ENCODE measurements at regions of chr1 and their contacts with region 1.

Region 1: GRCh38 chr1:204494281-204495077 is at the start of gene PIK3C2B:
- DNase-seq: peak; percentile 92
- H3K4me3 Mint-ChIP-seq: peak within 1 kb of the TSS; percentile 86
- H3K27ac Mint-ChIP-seq: peak within 1 kb of the TSS; percentile 24
- H3K4me1 Mint-ChIP-seq: peaks cover 26% of the 10 kb centered on the region
- H3K27me3 Mint-ChIP-seq: peaks cover 41% of the 10 kb centered on the region
- CTCF ChIP-seq: peak; percentile 93
- total RNA-seq, gene PIK3C2B: 3.4 and 4.4 TPM in 2 replicates

Region 2: GRCh38 chr1:204417231-204417997 is 77.1 kb before region 1 on chr1:
- CTCF ChIA-PET with region 1: interaction called, 1,125 read pairs
- POLR2A ChIA-PET with region 1: interaction called, 82 read pairs
- intact Hi-C with region 1: no loop called
- DNase-seq: peak; percentile 100
- H3K4me3 Mint-ChIP-seq: peak overlapping the region; percentile 65
- H3K27ac Mint-ChIP-seq: peak overlapping the region; percentile 91
- H3K4me1 Mint-ChIP-seq: peaks cover 48% of the 10 kb centered on the region
- H3K27me3 Mint-ChIP-seq: no peaks in the 10 kb centered on the region
- CTCF ChIP-seq: no peak

Region 3: DNA sequence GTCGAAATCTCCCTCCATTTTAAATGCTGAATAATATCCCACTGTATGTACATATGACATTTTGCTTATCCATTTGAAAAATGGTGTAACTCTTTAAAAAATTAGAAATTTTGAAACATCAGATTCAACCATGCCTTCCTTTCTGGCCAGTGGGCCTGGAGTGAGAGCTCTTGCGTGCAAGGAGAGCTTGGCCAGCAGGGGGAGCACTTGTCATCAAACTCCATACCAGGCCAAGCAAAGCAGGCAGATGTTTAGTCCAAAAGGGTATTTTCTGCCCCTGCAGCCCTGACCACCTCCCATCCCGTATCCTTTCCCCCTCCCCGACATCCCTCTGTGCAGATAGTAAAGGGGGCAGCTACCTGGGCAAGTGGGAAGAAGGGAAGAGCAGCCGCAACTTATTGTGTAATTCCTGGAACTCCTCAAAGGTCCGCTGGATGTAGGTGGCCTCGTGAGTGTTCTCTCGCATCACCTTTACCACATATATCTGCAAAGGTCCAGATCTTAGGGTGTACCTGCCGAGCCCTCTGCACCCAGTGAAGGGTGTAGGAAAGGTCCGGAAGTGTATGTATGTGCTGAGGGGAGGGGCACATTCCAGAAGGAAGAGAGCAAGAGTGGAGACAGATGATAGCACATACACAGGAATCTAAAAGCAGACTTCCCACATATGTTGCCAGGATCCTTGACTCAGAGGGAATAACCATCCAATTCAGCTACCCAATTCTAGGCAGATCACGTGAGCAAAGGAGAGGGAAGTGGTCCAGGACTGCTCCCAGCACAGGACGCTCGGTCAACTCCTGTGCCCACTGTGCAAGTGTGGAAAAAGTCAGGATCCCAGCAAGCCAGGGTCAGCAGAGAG is 62.9 kb before region 1 on chr1:
- CTCF ChIA-PET with region 1: interaction called, 1,125 read pairs
- POLR2A ChIA-PET with region 1: interaction called, 253 read pairs
- intact Hi-C with region 1: loop called (anchors 1 kb)
- DNase-seq: peak; percentile 88
- H3K4me3 Mint-ChIP-seq: no peak overlapping the region
- H3K27ac Mint-ChIP-seq: no peak overlapping the region
- H3K4me1 Mint-ChIP-seq: peaks cover 39% of the 10 kb centered on the region
- H3K27me3 Mint-ChIP-seq: no peaks in the 10 kb centered on the region
- CTCF ChIP-seq: peak; percentile 99

Region 4: GRCh38 chr1:204446370-204447111 is 47.9 kb before region 1 on chr1:
- CTCF ChIA-PET with region 1: interaction called, 1,125 read pairs
- POLR2A ChIA-PET with region 1: interaction called, 64 read pairs
- intact Hi-C with region 1: loop called (anchors 1 kb)
- DNase-seq: peak; percentile 65
- H3K4me3 Mint-ChIP-seq: no peak overlapping the region
- H3K27ac Mint-ChIP-seq: no peak overlapping the region
- H3K4me1 Mint-ChIP-seq: peaks cover 46% of the 10 kb centered on the region
- H3K27me3 Mint-ChIP-seq: no peaks in the 10 kb centered on the region
- CTCF ChIP-seq: peak; percentile 49

Region 5: GRCh38 chr1:204480515-204480914 is 14.0 kb before region 1 on chr1:
- CTCF ChIA-PET with region 1: interaction called, 19 read pairs
- POLR2A ChIA-PET with region 1: interaction called, 30 read pairs
- intact Hi-C with region 1: no loop called
- DNase-seq: no peak
- H3K4me3 Mint-ChIP-seq: no peak overlapping the region
- H3K27ac Mint-ChIP-seq: no peak overlapping the region
- H3K4me1 Mint-ChIP-seq: peaks cover 17% of the 10 kb centered on the region
- H3K27me3 Mint-ChIP-seq: peaks cover 1% of the 10 kb centered on the region
- CTCF ChIP-seq: no peak

Region 6: GRCh38 chr1:204736836-204737387 is 242.4 kb after region 1 on chr1:
- CTCF ChIA-PET with region 1: no interaction called
- POLR2A ChIA-PET with region 1: no interaction called
- intact Hi-C with region 1: no loop called
- DNase-seq: no peak
- H3K4me3 Mint-ChIP-seq: no peak overlapping the region
- H3K27ac Mint-ChIP-seq: no peak overlapping the region
- H3K4me1 Mint-ChIP-seq: no peaks in the 10 kb centered on the region
- H3K27me3 Mint-ChIP-seq: peaks cover 91% of the 10 kb centered on the region
- CTCF ChIP-seq: no peak

Measured in MCF 10A (cell line).